ENCODE measurements at regions of chr10 and their contacts with region 1.

Region 1: DNA sequence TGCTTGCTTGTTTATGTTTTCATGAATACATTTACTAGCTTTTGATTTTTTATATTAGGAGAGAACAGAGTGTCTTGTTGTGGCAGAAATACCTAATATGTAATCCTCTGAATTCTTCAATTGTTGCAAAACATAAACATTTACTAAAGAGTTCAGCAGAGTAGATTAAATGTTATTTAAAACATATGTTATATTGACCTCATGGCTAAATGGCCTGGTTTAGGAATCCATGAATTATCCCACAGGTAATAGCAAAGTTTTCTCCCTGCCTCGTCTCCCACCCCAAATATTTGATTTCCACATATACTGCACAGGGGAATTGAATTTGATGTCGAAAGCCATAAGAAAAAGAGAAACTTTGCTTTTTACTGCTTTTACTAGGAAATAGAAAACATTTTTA is 111.8 kb downstream of the ADK start:
- ATAC-seq: no peak
- H3K4me3 ChIP-seq: no peak overlapping the region
- H3K27ac ChIP-seq: no peak overlapping the region
- H3K4me1 ChIP-seq: no peaks in the 10 kb centered on the region

Region 2: DNA sequence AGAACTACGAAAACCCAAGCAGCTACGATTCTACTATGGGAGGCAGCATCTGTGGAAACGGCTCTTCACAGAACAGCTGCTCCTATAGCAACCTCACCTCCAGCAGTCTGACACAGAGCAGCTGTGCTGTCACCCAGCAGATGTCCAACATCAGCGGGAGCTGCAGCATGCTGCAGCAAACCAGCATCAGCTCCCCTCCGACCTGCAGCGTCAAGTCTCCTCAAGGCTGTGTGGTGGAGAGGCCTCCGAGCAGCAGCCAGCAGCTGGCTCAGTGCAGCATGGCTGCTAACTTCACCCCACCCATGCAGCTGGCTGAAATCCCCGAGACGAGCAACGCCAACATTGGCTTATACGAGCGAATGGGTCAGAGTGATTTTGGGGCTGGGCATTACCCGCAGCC is 767.0 kb after region 1 on chr10:
- in situ Hi-C with region 1: loop called in 1 of 9 experiments (anchors 10 kb)
- ATAC-seq: peak in 2 of 8 experiments; percentile 17 to 64
- H3K4me3 ChIP-seq: no peak overlapping the region
- H3K27ac ChIP-seq: no peak overlapping the region
- H3K4me1 ChIP-seq: no peaks in the 10 kb centered on the region